ENCODE measurements at regions of chr12 and their contacts with region 1.

Region 1: GRCh38 chr12:54984658-54985376 is at the start of gene TESPA1:
- DNase-seq: peak; percentile 57 to 94 (median 86)
- ATAC-seq: peak; percentile 76 to 90
- H3K4me3 Mint-ChIP-seq: peak within 1 kb of the TSS; percentile 83 to 99 (median 95)
- H3K27ac Mint-ChIP-seq: peak within 1 kb of the TSS; percentile 96 to 100 (median 99)
- H3K4me1 Mint-ChIP-seq: peaks cover 47 to 92% (median 74%) of the 10 kb centered on the region in 4 donors
- H3K27me3 Mint-ChIP-seq: no peaks in the 10 kb centered on the region
- polyA plus RNA-seq, gene TESPA1: 83.1 to 245 (median 180) TPM

Region 2: DNA sequence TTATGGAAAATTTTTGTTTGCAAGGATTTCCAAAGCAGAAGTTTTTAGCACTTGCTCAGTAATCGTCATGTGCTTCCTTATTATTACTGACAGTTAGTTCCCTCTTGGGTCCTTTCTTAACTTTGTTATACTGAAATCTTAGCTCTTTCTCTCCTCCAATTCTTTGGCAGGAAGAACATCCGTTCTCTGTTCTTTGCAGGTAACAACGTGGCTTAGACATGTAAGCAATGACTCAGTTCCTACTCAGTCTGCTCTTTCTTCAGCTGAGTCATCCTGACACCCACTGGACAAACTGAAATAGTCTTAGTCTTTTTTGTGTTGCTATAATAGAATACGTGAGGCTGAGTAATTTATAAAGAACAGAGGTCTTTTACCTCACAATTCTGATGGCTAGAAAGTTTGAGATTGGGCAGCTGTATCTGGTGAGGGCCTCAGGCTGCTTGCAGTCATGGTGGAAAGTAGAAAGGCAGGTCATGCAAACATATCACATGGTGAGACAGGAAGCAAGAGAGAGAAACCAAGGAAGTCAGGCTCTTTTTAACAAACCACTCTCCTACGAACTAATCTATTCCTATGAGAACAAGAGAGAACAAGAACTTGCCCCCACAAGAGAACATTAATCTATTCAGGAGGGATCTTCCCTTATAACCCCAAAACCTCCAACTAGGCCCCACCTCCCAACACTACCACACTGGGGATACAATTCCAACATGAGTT is 49.4 kb before region 1 on chr12:
- POLR2A ChIA-PET with region 1: interaction called, 11 read pairs
- DNase-seq: peak in 5 of 10 donors; percentile 14 to 52 (median 27)
- ATAC-seq: peak; percentile 93 to 96
- H3K4me3 Mint-ChIP-seq: peak overlapping the region in 9 of 10 donors; percentile 34 to 81 (median 54)
- H3K27ac Mint-ChIP-seq: peak overlapping the region; percentile 48 to 98 (median 88)
- H3K4me1 Mint-ChIP-seq: peaks cover 28 to 54% (median 51%) of the 10 kb centered on the region in 4 donors
- H3K27me3 Mint-ChIP-seq: no peaks in the 10 kb centered on the region

Region 3: GRCh38 chr12:54958048-54958658 is 26.7 kb before region 1 on chr12:
- POLR2A ChIA-PET with region 1: interaction called, 18 read pairs
- DNase-seq: peak in 9 of 10 donors; percentile 30 to 74 (median 56)
- ATAC-seq: peak; percentile 66
- H3K4me3 Mint-ChIP-seq: peak overlapping the region in 5 of 10 donors; percentile 1 to 30 (median 20)
- H3K27ac Mint-ChIP-seq: peak overlapping the region in 6 of 10 donors; percentile 36 to 90 (median 56)
- H3K4me1 Mint-ChIP-seq: peaks cover 38 to 96% (median 89%) of the 10 kb centered on the region in 4 donors
- H3K27me3 Mint-ChIP-seq: no peaks in the 10 kb centered on the region

Region 4: DNA sequence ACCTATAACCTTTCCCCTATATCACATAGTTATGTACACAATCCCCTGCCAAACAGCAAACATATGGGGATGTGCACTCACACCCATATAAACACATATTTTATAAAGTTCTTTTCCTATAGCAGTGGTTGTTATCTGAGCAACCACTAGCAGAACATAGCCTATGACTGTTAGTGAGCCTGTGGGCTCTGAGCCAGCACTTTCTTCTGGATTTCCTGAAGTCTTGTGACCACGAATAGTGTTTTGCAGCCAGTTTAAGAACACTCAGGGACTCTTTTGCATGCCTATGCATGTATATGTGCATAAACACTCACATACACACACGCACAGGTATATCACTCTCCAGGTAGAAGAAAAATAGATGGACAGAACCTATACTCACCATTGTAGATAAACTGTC is 17.4 kb before region 1 on chr12:
- POLR2A ChIA-PET with region 1: interaction called, 98 read pairs
- DNase-seq: peak in 7 of 10 donors; percentile 18 to 72 (median 35)
- ATAC-seq: peak; percentile 59 to 63
- H3K4me3 Mint-ChIP-seq: peak overlapping the region; percentile 67 to 85 (median 76)
- H3K27ac Mint-ChIP-seq: peak overlapping the region; percentile 72 to 96 (median 92)
- H3K4me1 Mint-ChIP-seq: peaks cover 52 to 90% (median 77%) of the 10 kb centered on the region in 4 donors
- H3K27me3 Mint-ChIP-seq: no peaks in the 10 kb centered on the region

Region 5: GRCh38 chr12:55017421-55017914 is 32.7 kb after region 1 on chr12:
- POLR2A ChIA-PET with region 1: no interaction called
- DNase-seq: no peak
- ATAC-seq: no peak
- H3K4me3 Mint-ChIP-seq: no peak overlapping the region
- H3K27ac Mint-ChIP-seq: no peak overlapping the region
- H3K4me1 Mint-ChIP-seq: peaks cover 8 to 13% (median 11%) of the 10 kb centered on the region in 4 donors
- H3K27me3 Mint-ChIP-seq: peaks cover 14 to 42% (median 25%) of the 10 kb centered on the region in 5 donors

Region 6: GRCh38 chr12:55073043-55074022 is 88.5 kb after region 1 on chr12:
- POLR2A ChIA-PET with region 1: interaction called, 13 read pairs
- DNase-seq: peak; percentile 57 to 89 (median 74)
- ATAC-seq: peak; percentile 63 to 73
- H3K4me3 Mint-ChIP-seq: no peak overlapping the region
- H3K27ac Mint-ChIP-seq: no peak overlapping the region
- H3K4me1 Mint-ChIP-seq: peaks cover 8 to 12% (median 11%) of the 10 kb centered on the region in 4 donors
- H3K27me3 Mint-ChIP-seq: peaks cover 9 to 30% (median 22%) of the 10 kb centered on the region in 5 donors

Measured in naive thymus-derived CD8-positive, alpha-beta T cell (primary cell).